PC-3 (cell line): ENCODE measurements at regions of chr3 and their contacts with region 1.

Region 1: DNA sequence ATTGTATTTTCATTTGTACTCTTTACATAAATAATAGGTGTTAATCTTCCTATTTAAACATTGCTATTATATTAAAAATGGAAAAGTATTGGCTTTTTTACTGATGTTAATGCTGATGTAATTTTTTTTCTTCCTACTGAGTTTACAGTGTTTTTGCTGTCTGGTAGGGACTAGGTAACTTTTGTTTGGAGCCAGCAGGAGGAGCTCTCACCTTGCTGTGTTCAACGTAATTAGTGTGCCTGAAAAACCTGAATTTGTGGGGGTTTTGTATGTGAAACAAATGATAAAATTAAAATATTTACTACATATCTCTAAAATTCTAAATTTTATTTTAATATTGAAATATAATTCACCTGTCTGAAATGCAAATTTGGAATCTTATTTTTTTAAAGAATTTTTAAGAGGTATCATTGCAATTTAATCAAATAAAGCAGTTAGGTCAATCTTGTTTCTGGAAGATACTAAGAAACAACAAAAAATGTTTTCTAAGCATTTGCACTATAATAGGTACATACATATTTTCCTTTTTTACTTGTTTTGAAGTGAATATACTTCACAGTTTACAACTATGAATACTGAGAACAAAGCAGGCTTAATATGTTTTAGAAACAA is 48.8 kb downstream of the EPHA6 start:
- DNase-seq: peak; percentile 63
- ATAC-seq: peak; percentile 67
- H3K4me3 ChIP-seq: no peak overlapping the region
- H3K27ac ChIP-seq: no peak overlapping the region
- H3K4me1 ChIP-seq: no peaks in the 10 kb centered on the region
- H3K27me3 ChIP-seq: no peaks in the 10 kb centered on the region
- CTCF ChIP-seq: peak; percentile 78

Region 2: DNA sequence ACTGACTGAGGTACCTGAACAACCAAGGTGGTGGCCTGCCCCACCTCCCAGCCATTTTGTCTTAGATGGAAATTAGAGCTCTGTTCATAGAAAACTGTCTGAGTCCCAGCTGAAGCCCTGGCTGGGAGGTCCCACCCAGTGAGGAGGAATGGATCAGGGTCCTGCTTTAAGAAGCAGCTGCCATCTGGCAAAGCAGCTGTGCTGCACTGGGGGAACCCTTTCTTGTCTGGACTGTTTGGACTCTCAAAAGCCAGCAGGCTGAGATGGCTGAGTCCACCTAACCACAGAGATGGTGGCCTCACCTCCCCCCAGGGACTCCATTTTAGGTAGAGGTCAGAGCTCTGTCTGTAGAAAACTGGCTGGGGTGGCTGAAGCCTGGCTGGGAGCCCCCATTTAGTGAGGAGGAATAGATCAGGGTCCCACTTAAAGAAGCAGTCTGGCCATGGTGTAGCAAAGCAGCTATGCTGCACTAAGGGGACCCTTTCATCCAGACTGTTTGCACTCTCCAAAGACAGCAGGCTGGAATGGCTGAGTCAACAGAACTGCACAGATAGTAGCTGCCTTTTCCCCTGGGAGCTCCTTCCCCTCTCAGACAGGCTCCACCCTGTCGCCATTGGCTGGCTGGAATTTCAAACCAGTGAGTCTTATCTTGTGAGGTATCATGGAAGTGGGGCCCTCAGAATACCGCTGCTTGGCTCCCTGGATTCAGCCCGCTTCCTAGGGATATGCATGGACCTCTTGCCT is 68.1 kb after region 1 on chr3:
- CTCF ChIA-PET with region 1: no interaction called
- POLR2A ChIA-PET with region 1: no interaction called
- intact Hi-C with region 1: no loop called
- DNase-seq: no peak
- ATAC-seq: no peak
- H3K4me3 ChIP-seq: no peak overlapping the region
- H3K27ac ChIP-seq: no peak overlapping the region
- H3K4me1 ChIP-seq: no peaks in the 10 kb centered on the region
- H3K27me3 ChIP-seq: no peaks in the 10 kb centered on the region
- CTCF ChIP-seq: no peak

Region 3: DNA sequence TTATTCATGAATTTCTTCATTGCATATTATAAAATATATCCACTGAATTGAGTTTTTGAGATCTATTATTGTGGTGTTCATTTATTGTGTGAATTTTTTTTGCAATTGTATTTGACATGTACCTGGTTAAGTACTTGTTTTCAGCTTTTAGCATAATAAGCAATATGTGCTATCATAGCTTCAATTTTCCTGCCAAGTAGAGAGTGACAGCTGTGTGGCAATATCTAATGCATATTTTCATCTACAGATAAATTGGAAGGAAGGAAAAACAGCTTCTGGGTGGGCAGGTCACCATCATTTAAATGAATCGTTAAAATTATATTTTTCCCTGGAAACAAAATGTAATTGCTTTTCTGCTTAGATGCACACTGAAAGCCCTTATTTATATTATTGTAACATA is 248.0 kb after region 1 on chr3:
- CTCF ChIA-PET with region 1: no interaction called
- POLR2A ChIA-PET with region 1: no interaction called
- intact Hi-C with region 1: loop called (anchors 10 kb)
- DNase-seq: no peak
- ATAC-seq: no peak
- H3K4me3 ChIP-seq: no peak overlapping the region
- H3K27ac ChIP-seq: no peak overlapping the region
- H3K4me1 ChIP-seq: no peaks in the 10 kb centered on the region
- H3K27me3 ChIP-seq: no peaks in the 10 kb centered on the region
- CTCF ChIP-seq: no peak

Region 4: GRCh38 chr3:97256060-97256459 is 392.8 kb after region 1 on chr3:
- CTCF ChIA-PET with region 1: no interaction called
- POLR2A ChIA-PET with region 1: no interaction called
- intact Hi-C with region 1: loop called (anchors 5 kb)
- DNase-seq: no peak
- ATAC-seq: no peak
- H3K4me3 ChIP-seq: no peak overlapping the region
- H3K27ac ChIP-seq: no peak overlapping the region
- H3K4me1 ChIP-seq: no peaks in the 10 kb centered on the region
- H3K27me3 ChIP-seq: no peaks in the 10 kb centered on the region
- CTCF ChIP-seq: no peak

Region 5: DNA sequence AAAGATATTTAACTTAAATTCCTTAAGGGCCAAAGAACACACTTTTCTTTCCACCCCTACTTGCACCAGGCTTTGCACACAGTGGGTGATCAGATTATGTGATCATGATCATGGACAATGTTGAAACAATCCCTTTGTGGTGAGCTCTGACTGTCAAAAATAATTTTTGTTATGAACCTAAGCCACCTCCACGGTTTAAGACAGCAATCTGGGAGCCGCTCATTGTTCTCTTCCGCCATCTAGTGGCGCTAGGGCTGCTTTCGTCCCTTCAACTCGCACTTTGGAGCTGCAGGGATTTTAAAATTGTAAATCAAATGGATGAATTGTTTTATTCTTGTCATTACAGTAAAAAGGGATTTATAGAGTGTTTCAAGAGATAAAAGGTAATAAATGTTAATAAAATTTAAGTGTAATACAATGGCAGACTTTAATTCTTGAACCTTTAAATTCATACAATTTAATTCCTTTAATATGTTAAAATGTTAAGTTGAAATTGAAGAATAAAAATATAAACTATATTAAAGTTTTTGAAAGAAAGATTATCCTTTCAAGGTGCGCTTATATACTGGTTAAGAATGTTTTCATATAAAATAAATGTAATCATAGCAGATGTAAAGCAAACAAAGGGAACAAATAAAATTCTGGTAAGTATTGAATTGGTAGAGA is 856.1 kb after region 1 on chr3:
- CTCF ChIA-PET with region 1: no interaction called
- POLR2A ChIA-PET with region 1: no interaction called
- intact Hi-C with region 1: loop called (anchors 1 kb)
- DNase-seq: peak; percentile 88
- ATAC-seq: peak; percentile 94
- H3K4me3 ChIP-seq: peak overlapping the region; percentile 37; the same call in 1 of the 2 replicates
- H3K27ac ChIP-seq: no peak overlapping the region
- H3K4me1 ChIP-seq: no peaks in the 10 kb centered on the region
- H3K27me3 ChIP-seq: no peaks in the 10 kb centered on the region
- CTCF ChIP-seq: peak; percentile 98